Activated CD8-positive, alpha-beta memory T cell treated with anti-CD3 and anti-CD28 coated beads, Interleukin-2, amount 10 ng/mL, durations not matched to agents 7 days and 5 days (primary cell): ENCODE measurements at regions of chr19 and their contacts with region 1.

Region 1: DNA sequence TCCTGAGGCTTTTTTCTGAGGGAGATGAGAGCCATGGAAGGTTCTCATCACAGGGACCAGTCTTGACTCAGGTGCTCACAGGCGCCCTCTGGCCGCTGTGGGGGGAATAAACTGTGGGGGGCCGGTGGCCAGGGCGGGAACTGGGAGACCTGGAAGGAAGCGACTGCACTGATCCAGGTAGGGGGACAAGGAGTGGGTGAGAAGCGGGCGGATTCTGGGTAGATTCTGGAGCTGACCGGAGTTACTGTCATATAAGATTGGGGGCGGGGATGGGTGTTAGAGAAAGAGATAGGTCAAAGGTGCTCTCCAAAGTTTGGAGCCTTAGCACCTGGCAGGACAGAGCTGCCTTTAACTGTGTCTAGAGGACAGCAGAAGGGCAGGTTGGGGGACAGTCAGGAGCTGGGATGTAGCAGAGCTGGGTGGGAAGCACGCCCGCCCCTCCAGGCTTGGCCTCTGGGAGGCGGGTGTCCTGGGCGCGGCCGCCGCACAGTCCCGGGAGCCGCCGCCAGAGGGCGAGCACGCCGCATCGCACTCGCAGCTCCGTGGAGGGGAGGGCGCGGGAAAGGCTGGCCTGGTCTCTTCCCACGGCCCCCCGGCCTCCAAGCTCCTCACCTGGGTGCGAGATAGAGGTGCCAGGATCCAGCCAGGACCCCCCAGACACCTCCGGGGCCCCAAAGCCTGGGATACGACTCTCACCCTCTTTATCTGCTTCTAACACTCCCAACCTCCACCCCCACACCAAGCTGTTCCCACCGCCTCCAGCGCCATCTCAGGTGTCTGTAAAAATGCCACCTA is 4.2 kb upstream of the DAND5 start:
- DNase-seq: peak; percentile 88
- ATAC-seq: peak; percentile 98
- H3K4me3 Mint-ChIP-seq: peak overlapping the region; percentile 74
- H3K27ac Mint-ChIP-seq: peak overlapping the region; percentile 86
- H3K4me1 Mint-ChIP-seq: peaks cover 8% of the 10 kb centered on the region
- H3K27me3 Mint-ChIP-seq: peaks cover 3% of the 10 kb centered on the region

Region 2: DNA sequence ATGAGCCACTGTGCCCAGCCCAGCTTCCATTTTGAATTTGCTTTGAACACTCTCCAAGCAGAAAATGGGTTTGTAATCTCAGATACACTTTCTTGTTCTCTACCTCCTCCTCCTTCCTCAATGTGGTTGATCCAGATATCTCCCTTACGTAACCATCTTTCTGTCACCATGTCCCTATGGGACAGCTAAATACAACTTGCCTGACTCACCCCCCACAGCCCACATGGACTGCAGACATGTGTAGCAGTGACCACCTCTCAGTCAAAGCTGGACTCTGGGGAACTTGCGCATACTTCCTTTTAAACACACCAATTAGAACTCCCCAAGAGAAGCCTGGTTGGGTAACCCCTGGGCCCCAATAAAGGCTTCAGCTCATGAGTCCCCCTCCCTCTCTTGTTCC is 553.3 kb before region 1 on chr19:
- CTCF ChIA-PET with region 1: no interaction called
- DNase-seq: no peak
- ATAC-seq: no peak
- H3K4me3 Mint-ChIP-seq: no peak overlapping the region
- H3K27ac Mint-ChIP-seq: no peak overlapping the region
- H3K4me1 Mint-ChIP-seq: no peaks in the 10 kb centered on the region
- H3K27me3 Mint-ChIP-seq: no peaks in the 10 kb centered on the region

Region 3: GRCh38 chr19:12881172-12881808 is 83.9 kb before region 1 on chr19 and contains the start of gene DNASE2:
- CTCF ChIA-PET with region 1: interaction called, 163 read pairs
- DNase-seq: peak; percentile 96
- ATAC-seq: peak; percentile 83
- H3K4me3 Mint-ChIP-seq: peak within 1 kb of the TSS; percentile 87
- H3K27ac Mint-ChIP-seq: peak within 1 kb of the TSS; percentile 87
- H3K4me1 Mint-ChIP-seq: peaks cover 38% of the 10 kb centered on the region
- H3K27me3 Mint-ChIP-seq: no peaks in the 10 kb centered on the region
- total RNA-seq, gene DNASE2: 32.5 to 34.1 TPM

Region 4: GRCh38 chr19:12913011-12913561 is 52.1 kb before region 1 on chr19:
- CTCF ChIA-PET with region 1: interaction called, 17 read pairs
- DNase-seq: no peak
- ATAC-seq: no peak
- H3K4me3 Mint-ChIP-seq: no peak overlapping the region
- H3K27ac Mint-ChIP-seq: peak overlapping the region; percentile 88
- H3K4me1 Mint-ChIP-seq: peaks cover 35% of the 10 kb centered on the region
- H3K27me3 Mint-ChIP-seq: no peaks in the 10 kb centered on the region

Region 5: GRCh38 chr19:13007292-13008045 is 42.3 kb after region 1 on chr19:
- CTCF ChIA-PET with region 1: interaction called, 11 read pairs
- DNase-seq: no peak
- ATAC-seq: no peak
- H3K4me3 Mint-ChIP-seq: no peak overlapping the region
- H3K27ac Mint-ChIP-seq: no peak overlapping the region
- H3K4me1 Mint-ChIP-seq: peaks cover under 1% of the 10 kb centered on the region
- H3K27me3 Mint-ChIP-seq: peaks cover 36% of the 10 kb centered on the region

Region 6: GRCh38 chr19:13093407-13094105 is 128.3 kb after region 1 on chr19:
- CTCF ChIA-PET with region 1: interaction called, 73 read pairs
- DNase-seq: peak; percentile 85
- ATAC-seq: peak; percentile 86
- H3K4me3 Mint-ChIP-seq: no peak overlapping the region
- H3K27ac Mint-ChIP-seq: no peak overlapping the region
- H3K4me1 Mint-ChIP-seq: peaks cover 12% of the 10 kb centered on the region
- H3K27me3 Mint-ChIP-seq: peaks cover 42% of the 10 kb centered on the region